ENCODE measurements at regions of chr1 and their contacts with region 1.

Region 1: DNA sequence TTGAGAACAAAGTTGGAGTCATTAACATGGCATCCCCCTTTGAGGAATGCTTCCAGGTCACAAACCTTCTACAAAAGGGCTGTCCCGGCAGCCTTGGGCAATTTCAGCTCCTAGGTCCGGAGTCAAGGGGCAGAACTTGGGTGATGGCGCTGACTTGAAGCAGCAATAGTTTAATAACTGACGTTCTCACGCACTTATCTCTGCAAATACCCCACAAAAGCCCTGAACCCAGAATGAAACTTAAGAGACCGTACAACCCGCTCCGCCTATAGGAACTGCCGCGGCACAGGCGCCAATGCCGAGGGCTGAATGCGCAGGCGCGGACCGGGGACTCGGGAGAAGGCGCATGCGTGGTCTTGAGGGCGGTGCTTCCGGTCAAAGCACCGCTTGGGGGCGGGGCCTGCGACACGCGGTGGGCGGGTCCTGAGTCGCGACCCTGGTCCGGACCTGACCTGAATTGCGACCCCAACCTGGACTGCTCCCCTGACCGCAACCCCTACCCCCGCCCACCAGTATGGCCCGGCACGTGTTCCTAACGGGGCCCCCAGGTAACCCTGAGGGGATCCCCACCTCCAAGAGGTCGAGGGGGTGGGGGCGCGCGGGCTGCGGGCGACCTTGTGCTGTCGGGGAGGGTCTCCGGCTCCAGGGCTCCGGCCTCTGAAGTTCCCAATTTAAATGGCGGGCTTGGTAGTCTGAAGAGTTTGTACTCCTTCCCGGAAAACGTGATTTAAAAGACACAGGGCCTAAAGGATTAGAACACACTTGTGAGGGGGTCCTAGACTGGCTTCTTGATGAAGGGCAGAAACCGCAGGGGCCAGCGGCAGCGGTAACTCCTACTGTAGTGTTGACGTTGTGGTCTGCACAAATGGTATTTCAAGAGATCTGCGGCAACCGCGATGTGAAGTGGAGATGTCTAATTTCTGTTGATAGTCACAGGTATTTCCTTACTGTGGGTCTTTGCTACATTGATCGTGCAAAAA is at the start of gene NTPCR:
- DNase-seq: peak; percentile 88 to 93
- H3K4me3 ChIP-seq: peak within 1 kb of the TSS; percentile 6 to 88 (median 60)
- H3K27ac ChIP-seq: peak within 1 kb of the TSS; percentile 63 to 81 (median 77)
- H3K4me1 ChIP-seq: peaks cover 7 to 23% of the 10 kb centered on the region in 2 donors
- H3K27me3 ChIP-seq: no peaks in the 10 kb centered on the region
- CTCF ChIP-seq: peak in 2 of 6 experiments; percentile 15 to 29
- POLR2A ChIP-seq: peak in 1 of 2 donors; percentile 67
- total RNA-seq, gene NTPCR: 32.3 to 53.5 (median 43.5) TPM

Region 2: DNA sequence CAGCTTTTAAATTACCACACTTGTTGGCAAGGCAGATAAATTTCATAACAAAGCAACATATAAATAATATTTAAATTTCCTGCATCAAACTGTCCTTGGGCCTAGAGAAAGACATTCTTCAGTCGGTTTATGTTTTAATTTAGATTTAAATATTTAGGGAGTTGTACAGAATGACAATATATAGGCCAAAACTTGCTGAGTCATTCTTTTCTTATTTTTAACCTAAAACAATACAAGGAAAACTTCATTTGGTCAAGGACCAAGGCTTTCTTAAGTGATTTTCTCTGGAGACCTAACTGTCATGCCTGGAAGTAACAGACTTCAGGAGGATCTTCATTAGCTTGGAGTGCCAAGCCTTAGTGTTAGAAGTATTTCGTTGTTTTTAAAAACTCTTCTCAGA is 139.6 kb before region 1 on chr1:
- intact Hi-C with region 1: loop called (anchors 10 kb)
- DNase-seq: no peak
- H3K4me3 ChIP-seq: no peak overlapping the region
- H3K27ac ChIP-seq: no peak overlapping the region
- H3K4me1 ChIP-seq: peaks cover 4 to 5% of the 10 kb centered on the region in 2 donors
- H3K27me3 ChIP-seq: no peaks in the 10 kb centered on the region
- CTCF ChIP-seq: no peak
- POLR2A ChIP-seq: no peak

Region 3: DNA sequence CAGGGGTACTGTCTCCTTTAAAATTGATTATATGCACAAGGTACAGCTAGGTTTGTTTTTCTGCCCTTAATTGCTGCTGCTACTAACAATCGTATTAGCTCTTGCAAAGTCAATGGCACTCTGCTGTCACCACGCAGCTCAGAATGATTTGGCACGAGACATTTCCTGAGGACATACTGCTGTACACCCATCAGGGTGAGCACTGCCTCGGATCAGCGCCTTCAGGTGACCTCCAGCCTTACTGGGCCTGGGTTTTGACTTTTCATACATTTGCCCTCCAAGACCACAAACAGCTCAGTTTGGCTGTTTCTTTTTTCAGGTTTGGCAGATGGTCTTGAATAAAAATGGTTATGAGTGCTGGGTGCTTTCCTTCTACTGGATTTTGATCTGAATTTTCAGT is 110.8 kb after region 1 on chr1:
- intact Hi-C with region 1: no loop called
- DNase-seq: peak; percentile 13 to 25
- H3K4me3 ChIP-seq: no peak overlapping the region
- H3K27ac ChIP-seq: no peak overlapping the region
- H3K4me1 ChIP-seq: peaks cover 0 to 3% of the 10 kb centered on the region in 2 donors
- H3K27me3 ChIP-seq: no peaks in the 10 kb centered on the region
- CTCF ChIP-seq: no peak
- POLR2A ChIP-seq: no peak